Transverse colon (tissue), 4 donors: ENCODE measurements at regions of chr12 and their contacts with region 1.

Region 1: DNA sequence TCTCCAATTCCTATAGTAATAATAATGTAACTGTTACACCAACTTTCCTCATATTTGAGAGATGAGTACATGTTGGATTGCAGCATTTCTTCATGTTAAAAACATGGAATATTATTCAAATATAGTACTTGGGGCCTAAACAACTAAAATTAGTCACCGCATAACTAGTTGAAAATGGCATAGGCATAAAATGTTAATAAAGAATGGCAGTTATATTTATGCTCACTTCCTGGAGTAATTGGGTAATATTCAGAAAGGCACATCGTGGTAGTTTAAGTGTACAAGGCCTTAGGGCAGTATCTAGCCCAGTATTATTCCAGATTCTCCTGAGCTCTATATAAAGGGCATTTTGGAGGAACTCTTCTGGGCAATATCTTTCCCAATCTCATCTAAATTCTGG is 46.0 kb downstream of the ERGIC2 start:
- DNase-seq: no peak
- H3K4me3 ChIP-seq: no peak overlapping the region
- H3K27ac ChIP-seq: no peak overlapping the region
- H3K4me1 ChIP-seq: no peaks in the 10 kb centered on the region
- H3K27me3 ChIP-seq: no peaks in the 10 kb centered on the region
- CTCF ChIP-seq: no peak
- EP300 ChIP-seq: no peak
- POLR2A ChIP-seq: no peak

Region 2: DNA sequence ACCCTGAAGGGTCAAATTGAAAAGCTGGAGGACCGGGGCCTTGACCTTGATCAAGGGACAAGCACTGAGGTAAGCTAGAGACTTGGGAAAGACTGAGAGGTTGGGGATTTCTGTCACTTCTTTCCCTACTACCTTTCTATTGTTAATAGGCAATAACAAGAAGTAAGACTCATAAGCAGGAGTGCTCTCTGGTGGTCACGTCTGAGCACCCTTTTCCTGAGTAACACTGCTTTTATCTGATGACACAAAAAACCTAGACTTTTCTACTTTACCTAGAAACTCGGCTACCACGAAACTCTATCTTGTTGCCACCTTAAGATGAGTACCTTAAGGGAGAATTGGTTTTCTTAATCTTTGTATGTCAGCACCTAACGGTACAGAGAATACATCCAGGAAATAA is 1846.5 kb before region 1 on chr12:
- in situ Hi-C with region 1: no loop called
- intact Hi-C with region 1: loop called (anchors 5 kb)
- DNase-seq: no peak
- H3K4me3 ChIP-seq: no peak overlapping the region
- H3K27ac ChIP-seq: no peak overlapping the region
- H3K4me1 ChIP-seq: no peaks in the 10 kb centered on the region
- H3K27me3 ChIP-seq: no peaks in the 10 kb centered on the region
- CTCF ChIP-seq: no peak
- EP300 ChIP-seq: no peak
- POLR2A ChIP-seq: no peak